Naive thymus-derived CD4-positive, alpha-beta T cell (primary cell): ENCODE measurements at regions of chr2 and their contacts with region 1.

Region 1: GRCh38 chr2:60756191-60757041 is at the start of gene PAPOLG:
- DNase-seq: peak; percentile 90 to 97 (median 93)
- ATAC-seq: peak; percentile 100
- H3K4me3 ChIP-seq: peak within 1 kb of the TSS; percentile 86
- H3K4me3 Mint-ChIP-seq: peak within 1 kb of the TSS; percentile 94 to 100 (median 98)
- H3K27ac ChIP-seq: peak within 1 kb of the TSS; percentile 85
- H3K27ac Mint-ChIP-seq: peak within 1 kb of the TSS; percentile 94 to 100 (median 98)
- H3K4me1 ChIP-seq: peaks cover 0 to 13% of the 10 kb centered on the region in 2 donors
- H3K4me1 Mint-ChIP-seq: peaks cover 24 to 53% (median 46%) of the 10 kb centered on the region in 7 donors
- H3K27me3 ChIP-seq: no peaks in the 10 kb centered on the region
- H3K27me3 Mint-ChIP-seq: no peaks in the 10 kb centered on the region
- total RNA-seq, gene PAPOLG: 15.1 to 42.4 (median 22.9) TPM

Region 2: DNA sequence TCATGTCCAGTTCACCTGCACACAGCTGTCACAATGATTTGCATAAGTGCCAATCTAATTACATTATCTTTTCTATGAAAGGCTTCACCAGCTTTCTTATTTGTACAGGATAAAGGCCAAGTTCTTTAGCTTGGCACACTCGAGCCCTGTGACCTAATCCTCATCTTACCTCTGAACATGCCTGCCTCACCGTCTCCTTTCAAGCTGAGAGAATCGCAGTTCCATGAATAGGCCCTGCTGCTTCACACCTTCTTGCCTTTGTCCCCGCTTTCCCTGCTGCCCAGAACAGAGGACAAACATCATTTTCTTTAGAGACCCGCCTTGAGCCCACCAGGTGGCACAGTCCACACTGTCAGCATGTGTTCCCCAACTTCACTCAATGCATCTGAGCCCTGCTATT is 1297.6 kb before region 1 on chr2:
- CTCF ChIA-PET with region 1: no interaction called
- POLR2A ChIA-PET with region 1: no interaction called
- intact Hi-C with region 1: no loop called
- DNase-seq: no peak
- ATAC-seq: no peak
- H3K4me3 ChIP-seq: no peak overlapping the region
- H3K4me3 Mint-ChIP-seq: no peak overlapping the region
- H3K27ac ChIP-seq: no peak overlapping the region
- H3K27ac Mint-ChIP-seq: peak overlapping the region in 1 of 9 donors; percentile 21
- H3K4me1 ChIP-seq: no peaks in the 10 kb centered on the region
- H3K4me1 Mint-ChIP-seq: peaks cover 0 to 5% (median 0%) of the 10 kb centered on the region in 7 donors
- H3K27me3 ChIP-seq: no peaks in the 10 kb centered on the region
- H3K27me3 Mint-ChIP-seq: peaks cover 0 to 10% (median 0%) of the 10 kb centered on the region in 5 donors

Region 3: DNA sequence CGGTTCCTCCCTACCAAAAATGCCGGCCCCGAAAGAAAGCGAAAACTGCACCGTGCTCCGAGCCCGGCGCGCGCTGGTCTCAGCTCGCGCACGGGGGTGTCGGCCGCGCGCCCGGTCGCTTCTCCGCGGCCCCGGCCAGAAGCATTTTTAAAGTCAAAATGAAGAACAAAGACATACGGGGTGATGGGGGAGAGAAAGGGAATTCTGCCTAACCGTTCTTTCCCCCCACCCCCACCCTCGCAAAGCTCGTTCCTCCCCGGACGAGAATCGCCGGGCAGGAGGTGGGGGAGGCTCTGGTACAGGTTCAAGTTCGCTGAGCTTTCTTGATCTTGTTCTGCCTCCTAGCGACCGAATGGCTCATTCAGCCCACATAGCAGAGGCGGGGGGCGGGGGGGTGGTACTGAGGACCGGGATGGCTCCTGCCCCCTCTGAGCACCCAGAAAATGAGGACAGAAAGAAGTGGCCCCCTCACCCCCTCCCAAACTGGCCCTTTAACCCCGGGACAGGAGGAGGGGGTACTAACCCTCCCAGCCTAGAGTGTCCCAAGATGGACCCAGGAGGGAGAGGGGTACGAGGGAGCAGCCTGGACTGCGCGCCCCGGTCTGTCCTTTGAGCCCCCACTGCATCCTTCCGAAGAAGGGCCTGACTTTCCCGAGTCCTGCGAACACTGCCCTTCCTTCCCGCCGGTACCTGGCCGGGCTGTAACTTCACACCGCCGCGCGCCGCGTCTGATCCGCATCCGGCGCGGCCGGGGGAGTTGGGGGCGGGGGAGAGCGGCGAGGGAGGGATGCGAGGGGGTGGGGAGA is 206.0 kb before region 1 on chr2:
- CTCF ChIA-PET with region 1: no interaction called
- POLR2A ChIA-PET with region 1: no interaction called
- intact Hi-C with region 1: loop called in 1 of 2 experiments (anchors 5 kb)
- DNase-seq: peak in 8 of 9 donors; percentile 23 to 67 (median 50)
- ATAC-seq: peak; percentile 71
- H3K4me3 ChIP-seq: peak overlapping the region; percentile 70
- H3K4me3 Mint-ChIP-seq: peak overlapping the region; percentile 80 to 93 (median 90)
- H3K27ac ChIP-seq: peak overlapping the region; percentile 39
- H3K27ac Mint-ChIP-seq: peak overlapping the region in 6 of 9 donors; percentile 29 to 89 (median 68)
- H3K4me1 ChIP-seq: peaks cover 9 to 17% of the 10 kb centered on the region in 2 donors
- H3K4me1 Mint-ChIP-seq: peaks cover 11 to 57% (median 34%) of the 10 kb centered on the region in 7 donors
- H3K27me3 ChIP-seq: peaks cover 10 to 39% of the 10 kb centered on the region in 2 donors
- H3K27me3 Mint-ChIP-seq: peaks cover 46 to 87% (median 55%) of the 10 kb centered on the region in 5 donors

Region 4: DNA sequence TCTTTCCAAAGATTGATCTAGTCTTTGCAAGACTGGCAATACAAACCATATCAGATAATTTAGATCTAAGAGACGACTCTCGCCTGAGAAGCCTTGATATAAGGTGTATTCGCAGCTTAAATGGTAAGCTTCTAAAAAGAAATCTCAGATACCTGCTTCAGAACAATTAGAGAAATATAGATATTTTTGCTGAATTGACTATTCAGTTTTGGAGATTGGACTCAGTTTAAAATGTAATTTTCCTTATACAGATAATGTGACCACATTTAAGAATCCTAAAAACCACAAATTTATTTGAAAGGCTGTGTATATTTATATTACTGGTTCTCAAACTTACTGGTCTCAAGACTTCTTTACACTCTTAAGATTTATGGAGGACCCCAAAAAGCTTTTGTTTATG is 15.1 kb after region 1 on chr2:
- CTCF ChIA-PET with region 1: interaction called, 4 read pairs
- POLR2A ChIA-PET with region 1: interaction called, 10 read pairs
- intact Hi-C with region 1: no loop called
- DNase-seq: no peak
- ATAC-seq: no peak
- H3K4me3 ChIP-seq: no peak overlapping the region
- H3K4me3 Mint-ChIP-seq: no peak overlapping the region
- H3K27ac ChIP-seq: no peak overlapping the region
- H3K27ac Mint-ChIP-seq: no peak overlapping the region
- H3K4me1 ChIP-seq: no peaks in the 10 kb centered on the region
- H3K4me1 Mint-ChIP-seq: peaks cover 2 to 27% (median 22%) of the 10 kb centered on the region in 7 donors
- H3K27me3 ChIP-seq: no peaks in the 10 kb centered on the region
- H3K27me3 Mint-ChIP-seq: no peaks in the 10 kb centered on the region

Region 5: DNA sequence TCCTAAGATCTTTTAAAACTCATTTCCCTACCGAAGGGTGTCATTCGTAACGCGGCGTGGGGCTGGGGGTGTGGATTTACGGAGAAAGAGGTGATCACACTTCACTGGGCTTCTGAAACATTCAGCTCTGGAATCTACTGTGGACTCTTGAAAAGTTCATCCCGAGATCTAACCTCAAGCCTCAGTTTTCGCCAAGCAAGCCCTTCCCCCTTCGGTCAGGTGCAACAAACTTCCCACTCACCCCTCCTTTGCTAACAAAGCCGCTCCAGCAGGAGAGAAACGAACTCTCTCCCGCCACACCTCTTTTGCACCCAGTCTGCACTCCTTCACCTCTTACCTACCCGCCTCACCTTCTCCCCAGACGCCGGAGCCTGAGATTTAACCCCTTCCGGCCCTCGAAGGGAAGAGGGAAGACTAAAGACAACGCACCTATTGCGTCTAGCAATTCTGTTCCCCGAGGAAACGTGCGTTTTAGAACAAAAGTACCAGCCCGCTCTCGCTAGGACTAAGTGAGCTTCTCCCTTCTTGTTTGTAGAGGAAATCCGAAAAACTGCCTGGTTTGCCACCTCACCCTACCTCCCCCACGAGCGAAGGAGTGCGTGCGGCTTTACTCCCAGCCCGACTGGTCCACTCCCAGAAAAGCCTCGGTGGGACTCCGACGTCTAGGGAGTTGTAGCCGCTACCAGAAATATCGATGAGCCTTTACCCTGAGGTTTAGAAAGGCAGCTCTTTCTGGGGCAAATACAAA is 260.6 kb after region 1 on chr2:
- CTCF ChIA-PET with region 1: no interaction called
- POLR2A ChIA-PET with region 1: no interaction called
- intact Hi-C with region 1: loop called (anchors 1 kb)
- DNase-seq: peak; percentile 41 to 75 (median 72)
- ATAC-seq: peak; percentile 79
- H3K4me3 ChIP-seq: peak overlapping the region; percentile 100
- H3K4me3 Mint-ChIP-seq: peak overlapping the region; percentile 93 to 100 (median 97)
- H3K27ac ChIP-seq: peak overlapping the region; percentile 75
- H3K27ac Mint-ChIP-seq: peak overlapping the region; percentile 90 to 99 (median 95)
- H3K4me1 ChIP-seq: peaks cover 14 to 20% of the 10 kb centered on the region in 2 donors
- H3K4me1 Mint-ChIP-seq: peaks cover 23 to 68% (median 48%) of the 10 kb centered on the region in 7 donors
- H3K27me3 ChIP-seq: no peaks in the 10 kb centered on the region
- H3K27me3 Mint-ChIP-seq: no peaks in the 10 kb centered on the region

Region 6: DNA sequence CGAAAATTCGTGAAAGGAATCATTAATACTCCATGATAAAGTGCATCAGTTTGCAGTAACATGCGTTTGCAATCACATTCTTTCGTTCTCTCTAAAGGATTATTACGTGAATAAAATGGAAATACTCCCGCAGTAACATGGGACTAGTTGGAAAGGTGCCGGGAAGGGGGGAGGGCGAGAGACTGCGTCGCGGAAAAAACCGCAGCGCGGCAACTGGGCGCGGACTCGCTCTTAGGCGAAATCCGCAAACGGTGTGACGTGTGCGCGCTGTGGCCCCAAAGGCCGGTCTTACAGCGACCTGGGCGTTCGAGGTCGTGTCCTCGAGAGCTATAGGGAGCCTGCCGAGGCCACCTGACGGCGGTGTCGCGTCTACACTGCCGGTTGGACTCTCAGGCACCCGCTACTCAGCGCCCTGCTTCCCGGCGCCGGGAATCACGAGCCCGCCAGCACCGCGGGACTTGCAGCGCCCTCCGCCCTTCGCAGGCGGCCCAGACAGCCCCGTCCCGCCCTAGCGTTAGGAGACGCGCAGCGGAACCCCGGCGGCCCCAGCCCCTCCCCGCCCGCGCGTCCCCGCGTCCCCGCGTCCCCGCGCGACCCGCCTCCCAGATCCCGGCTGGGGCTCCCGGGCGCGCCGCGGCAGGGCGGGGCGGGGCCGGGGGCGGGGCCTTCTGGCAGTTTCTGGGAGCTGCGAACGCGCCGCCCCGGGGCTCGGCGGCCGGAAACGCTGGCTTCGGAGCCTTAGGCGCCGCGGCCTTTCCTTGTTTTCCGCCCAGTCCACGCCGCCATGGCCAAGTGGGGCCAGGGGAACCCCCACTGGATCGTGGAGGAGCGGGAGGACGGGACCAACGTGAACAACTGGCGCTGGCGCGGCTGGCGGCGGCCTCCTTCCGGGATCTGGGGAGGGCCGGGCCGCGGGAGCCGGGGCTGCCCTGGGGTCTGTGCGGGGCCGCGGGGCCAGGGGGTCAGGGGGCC is 420.6 kb after region 1 on chr2:
- CTCF ChIA-PET with region 1: no interaction called
- POLR2A ChIA-PET with region 1: interaction called, 3 read pairs
- intact Hi-C with region 1: loop called (anchors 1 kb)
- DNase-seq: peak; percentile 89 to 97 (median 93)
- ATAC-seq: peak; percentile 95
- H3K4me3 ChIP-seq: peak overlapping the region; percentile 82
- H3K4me3 Mint-ChIP-seq: peak overlapping the region; percentile 90 to 100 (median 94)
- H3K27ac ChIP-seq: peak overlapping the region; percentile 97
- H3K27ac Mint-ChIP-seq: peak overlapping the region; percentile 89 to 97 (median 95)
- H3K4me1 ChIP-seq: peaks cover 27 to 41% of the 10 kb centered on the region in 2 donors
- H3K4me1 Mint-ChIP-seq: peaks cover 38 to 53% (median 48%) of the 10 kb centered on the region in 7 donors
- H3K27me3 ChIP-seq: no peaks in the 10 kb centered on the region
- H3K27me3 Mint-ChIP-seq: peaks cover 0 to 8% (median 0%) of the 10 kb centered on the region in 5 donors

Region 7: DNA sequence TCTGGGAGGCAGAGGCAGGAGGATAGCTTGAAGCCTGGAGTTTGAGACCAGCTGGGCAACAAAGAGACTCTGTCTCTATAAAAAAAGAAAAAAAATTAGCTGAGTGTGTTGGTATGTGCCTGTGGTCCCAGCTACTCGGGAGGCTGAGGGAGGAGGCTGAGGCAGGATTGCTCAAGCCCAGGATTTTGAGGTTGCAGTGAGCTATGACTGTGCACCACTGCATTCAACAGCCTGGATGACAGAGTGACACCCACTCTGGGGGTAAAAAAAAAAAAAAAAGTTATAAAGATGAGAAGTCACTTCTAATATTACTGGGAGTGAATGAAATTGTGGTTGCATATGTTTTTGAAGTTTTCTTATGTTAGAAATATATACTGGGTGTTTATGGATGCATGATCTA is 477.2 kb after region 1 on chr2:
- CTCF ChIA-PET with region 1: no interaction called
- POLR2A ChIA-PET with region 1: no interaction called
- intact Hi-C with region 1: no loop called
- DNase-seq: no peak
- ATAC-seq: no peak
- H3K4me3 ChIP-seq: no peak overlapping the region
- H3K4me3 Mint-ChIP-seq: no peak overlapping the region
- H3K27ac ChIP-seq: no peak overlapping the region
- H3K27ac Mint-ChIP-seq: peak overlapping the region in 4 of 9 donors; percentile 5 to 62 (median 44)
- H3K4me1 ChIP-seq: peaks cover 4 to 9% of the 10 kb centered on the region in 2 donors
- H3K4me1 Mint-ChIP-seq: peaks cover 5 to 13% (median 6%) of the 10 kb centered on the region in 7 donors
- H3K27me3 ChIP-seq: no peaks in the 10 kb centered on the region
- H3K27me3 Mint-ChIP-seq: no peaks in the 10 kb centered on the region

Region 8: DNA sequence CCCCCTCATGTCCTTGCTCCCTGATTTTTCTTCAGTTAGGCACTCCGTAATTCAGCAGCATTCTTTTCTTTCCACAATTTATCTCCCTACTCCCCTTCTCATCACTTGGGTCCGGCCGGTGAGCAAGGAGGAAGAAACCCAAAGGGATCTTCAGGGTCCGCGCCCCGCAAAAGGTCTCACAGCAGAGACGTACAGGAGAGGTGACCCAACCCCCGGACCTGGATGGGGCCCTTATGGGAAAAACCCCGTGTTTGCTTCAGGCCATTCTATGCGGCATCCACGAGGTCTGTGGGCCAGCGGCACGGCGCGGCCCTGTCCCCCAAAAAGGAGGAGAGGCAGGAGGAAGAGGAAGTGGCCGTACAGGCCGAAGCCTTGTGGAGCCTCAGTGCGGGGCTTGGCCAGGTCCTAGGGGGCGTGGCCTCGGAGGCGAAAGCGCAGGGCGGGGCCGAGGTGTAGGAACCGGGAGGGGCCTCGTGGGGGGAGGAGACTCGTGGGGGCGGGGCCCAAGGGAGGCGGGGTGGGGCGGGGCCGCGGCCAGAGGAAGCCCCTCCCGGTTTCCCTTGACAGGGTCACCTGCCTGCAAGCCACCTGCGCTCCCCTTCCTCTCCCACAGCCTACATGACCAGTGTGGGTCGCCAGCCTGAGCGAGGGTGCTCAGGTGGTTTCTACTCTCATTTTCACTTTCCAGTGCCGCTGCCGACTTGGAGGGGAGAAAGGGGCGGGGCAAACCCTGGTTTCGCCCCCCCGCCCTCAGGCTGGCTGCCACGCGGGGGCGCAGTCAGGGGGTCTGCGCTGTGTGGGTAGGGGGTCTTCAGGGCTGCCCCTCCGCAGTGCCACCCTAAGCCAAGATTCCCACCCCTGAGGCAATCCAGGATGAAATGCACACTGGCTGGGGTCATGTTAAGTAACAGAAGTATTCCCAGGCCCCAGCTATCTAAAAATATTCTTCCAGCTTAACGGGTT is 938.2 kb after region 1 on chr2:
- CTCF ChIA-PET with region 1: no interaction called
- POLR2A ChIA-PET with region 1: no interaction called
- intact Hi-C with region 1: loop called (anchors 1 to 5 kb)
- DNase-seq: peak; percentile 62 to 91 (median 77)
- ATAC-seq: peak; percentile 99
- H3K4me3 ChIP-seq: peak overlapping the region; percentile 74
- H3K4me3 Mint-ChIP-seq: peak overlapping the region; percentile 84 to 96 (median 91)
- H3K27ac ChIP-seq: peak overlapping the region; percentile 62
- H3K27ac Mint-ChIP-seq: peak overlapping the region; percentile 74 to 92 (median 87)
- H3K4me1 ChIP-seq: peaks cover 0 to 5% of the 10 kb centered on the region in 2 donors
- H3K4me1 Mint-ChIP-seq: peaks cover 4 to 19% (median 15%) of the 10 kb centered on the region in 7 donors
- H3K27me3 ChIP-seq: no peaks in the 10 kb centered on the region
- H3K27me3 Mint-ChIP-seq: peaks cover 0 to 4% (median 0%) of the 10 kb centered on the region in 5 donors